A549 (cell line): ENCODE measurements at regions of chr11 and their contacts with region 1.

Region 1: DNA sequence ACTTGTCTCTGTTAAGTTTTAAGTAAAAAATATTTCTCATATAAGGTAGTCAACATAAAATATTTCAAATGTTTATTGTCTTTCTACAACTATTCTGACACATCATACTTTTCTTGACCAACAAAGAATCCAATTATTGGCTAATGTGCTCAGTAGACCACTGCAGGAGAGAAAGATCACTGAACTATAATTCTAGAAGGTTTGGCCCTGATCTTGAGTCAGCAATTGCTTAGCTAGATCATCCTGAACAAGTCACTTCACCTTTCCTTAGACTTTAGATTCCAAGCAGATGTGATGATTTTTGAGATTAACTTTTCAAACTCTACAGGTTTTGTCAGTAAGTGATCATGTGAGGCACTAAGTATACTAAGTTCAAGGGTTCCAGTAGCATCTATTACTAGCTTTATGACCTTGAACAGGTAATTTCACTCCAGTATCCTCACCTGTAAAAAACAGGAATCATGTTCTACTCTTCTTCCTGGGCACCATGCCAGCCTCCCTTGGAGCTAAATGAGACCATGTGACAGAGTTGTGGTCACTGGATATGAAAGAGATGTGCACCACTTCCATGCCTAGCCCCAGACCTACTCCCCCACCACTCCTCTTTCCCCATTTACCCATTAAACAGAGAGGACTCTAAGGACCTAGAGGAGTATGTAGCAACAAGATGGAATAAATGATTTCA is 17.3 kb downstream of the PGM2L1 start:
- DNase-seq: peak in 1 of 2 experiments; percentile 16
- ATAC-seq: peak in 1 of 2 experiments; percentile 22; a peak in 3 of 6 replicates
- H3K4me3 ChIP-seq: no peak overlapping the region
- H3K27ac ChIP-seq: peak overlapping the region in 1 of 2 experiments; percentile 32; a peak in 3 of 6 replicates
- H3K4me1 ChIP-seq: peaks cover 42% of the 10 kb centered on the region
- CTCF ChIP-seq: no peak
- EP300 ChIP-seq: no peak
- POLR2A ChIP-seq: no peak
- RAD21 ChIP-seq: no peak

Region 2: DNA sequence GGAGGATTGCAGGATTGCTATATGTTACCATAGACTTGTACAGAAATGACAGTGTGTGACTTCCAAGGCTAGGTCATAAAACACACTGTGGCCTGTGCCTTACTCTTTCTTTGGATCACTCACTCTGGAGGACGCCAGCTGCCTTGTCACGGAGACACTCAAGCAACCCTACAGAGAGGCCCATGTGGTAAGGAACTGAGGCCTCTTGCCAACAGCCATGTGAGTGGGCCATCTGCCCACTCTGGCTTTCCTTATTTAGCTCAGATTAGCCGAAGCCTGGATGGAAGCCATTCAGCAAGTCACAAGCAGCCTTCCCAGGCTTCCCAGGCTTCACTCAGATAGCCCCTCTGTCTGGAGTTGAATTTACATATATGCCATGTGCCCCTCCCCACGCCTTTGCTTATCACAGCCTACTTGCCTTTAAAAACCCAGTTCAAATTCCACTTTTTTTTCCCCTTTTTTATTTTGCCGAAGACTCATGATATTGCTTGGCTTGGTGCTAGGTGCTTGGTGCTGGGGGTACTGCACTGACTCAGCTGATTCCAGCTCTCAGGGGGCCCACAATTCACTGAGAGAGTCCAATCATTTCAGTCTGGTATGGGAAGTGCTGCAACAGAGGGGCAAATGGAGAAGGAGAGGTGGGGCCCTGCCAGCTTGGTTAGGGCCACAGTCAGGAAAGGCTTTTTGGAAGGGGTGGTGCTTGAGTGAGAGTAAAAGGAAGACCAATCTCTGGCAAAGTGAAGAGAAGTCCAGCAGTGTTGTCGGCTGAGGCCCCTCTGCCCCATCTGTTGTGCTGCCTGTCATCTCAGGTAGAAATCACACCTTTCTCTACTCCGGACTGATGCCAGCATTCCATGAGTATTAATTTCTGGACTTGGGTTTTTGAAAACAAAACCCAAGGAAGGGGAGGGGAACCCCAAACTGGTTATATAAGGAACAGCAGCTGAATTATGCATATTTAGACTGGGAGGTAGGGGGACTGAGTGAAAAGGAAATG is 54.9 kb before region 1 on chr11:
- CTCF ChIA-PET with region 1: no interaction called
- POLR2A ChIA-PET with region 1: no interaction called
- DNase-seq: no peak
- ATAC-seq: no peak; a peak in 1 of 6 replicates
- H3K4me3 ChIP-seq: no peak overlapping the region
- H3K27ac ChIP-seq: peak overlapping the region; percentile 14 to 16; a peak in 5 of 6 replicates
- H3K4me1 ChIP-seq: peaks cover 13% of the 10 kb centered on the region
- CTCF ChIP-seq: no peak
- EP300 ChIP-seq: no peak
- POLR2A ChIP-seq: no peak
- RAD21 ChIP-seq: no peak

Region 3: GRCh38 chr11:74443071-74443864 is 62.4 kb after region 1 on chr11:
- CTCF ChIA-PET with region 1: interaction called, 10 read pairs
- POLR2A ChIA-PET with region 1: no interaction called
- DNase-seq: peak; percentile 44 to 74
- ATAC-seq: peak; percentile 89 to 95
- H3K4me3 ChIP-seq: no peak overlapping the region
- H3K27ac ChIP-seq: peak overlapping the region; percentile 62 to 71
- H3K4me1 ChIP-seq: peaks cover 20% of the 10 kb centered on the region
- CTCF ChIP-seq: peak; percentile 69
- EP300 ChIP-seq: no peak
- POLR2A ChIP-seq: no peak
- RAD21 ChIP-seq: peak; percentile 84 to 88

Region 4: DNA sequence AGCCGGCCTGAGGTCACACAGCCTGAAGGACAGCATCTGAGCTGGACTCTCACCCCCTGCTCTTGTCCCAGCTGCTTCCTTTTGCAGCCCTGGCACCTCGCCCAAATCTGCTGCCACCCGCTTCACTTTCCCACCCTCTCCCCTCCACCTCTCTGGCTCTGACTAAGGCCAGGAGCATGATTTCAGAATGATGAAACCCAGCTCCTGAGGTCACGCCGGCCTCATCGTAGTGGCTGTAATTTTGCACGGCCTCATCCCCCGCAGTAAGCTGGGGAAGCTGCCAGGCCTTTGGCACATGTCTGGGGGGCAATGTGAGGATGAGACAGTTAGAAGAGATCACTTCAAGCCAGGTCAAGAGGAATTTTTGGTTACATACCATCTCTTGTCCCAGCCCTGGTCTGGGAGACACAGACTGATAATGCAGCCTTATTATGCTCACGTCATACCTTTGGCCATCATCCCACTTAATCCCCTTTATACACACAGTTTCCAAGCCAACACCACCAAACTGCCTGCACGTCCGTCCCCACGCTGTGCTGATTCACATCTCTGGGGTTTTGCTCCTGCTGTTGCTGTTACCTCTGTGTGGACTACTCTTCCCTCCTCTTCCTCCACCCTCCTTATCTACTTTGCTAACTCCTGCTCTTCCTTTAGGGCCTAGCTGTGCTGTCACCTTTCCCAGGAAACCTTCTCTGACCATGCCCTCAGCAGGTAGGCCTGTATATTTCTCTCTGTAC is 292.2 kb after region 1 on chr11:
- CTCF ChIA-PET with region 1: no interaction called
- POLR2A ChIA-PET with region 1: no interaction called
- DNase-seq: peak; percentile 86 to 98
- ATAC-seq: peak; percentile 90 to 91
- H3K4me3 ChIP-seq: no peak overlapping the region
- H3K27ac ChIP-seq: peak overlapping the region; percentile 98 to 100
- H3K4me1 ChIP-seq: peaks cover 45% of the 10 kb centered on the region
- CTCF ChIP-seq: no peak
- EP300 ChIP-seq: peak; percentile 90 to 97
- POLR2A ChIP-seq: no peak
- RAD21 ChIP-seq: peak in 1 of 2 experiments; percentile 42; a peak in 4 of 5 replicates